MCF 10A (cell line): ENCODE measurements at regions of chr20 and their contacts with region 1.

Region 1: DNA sequence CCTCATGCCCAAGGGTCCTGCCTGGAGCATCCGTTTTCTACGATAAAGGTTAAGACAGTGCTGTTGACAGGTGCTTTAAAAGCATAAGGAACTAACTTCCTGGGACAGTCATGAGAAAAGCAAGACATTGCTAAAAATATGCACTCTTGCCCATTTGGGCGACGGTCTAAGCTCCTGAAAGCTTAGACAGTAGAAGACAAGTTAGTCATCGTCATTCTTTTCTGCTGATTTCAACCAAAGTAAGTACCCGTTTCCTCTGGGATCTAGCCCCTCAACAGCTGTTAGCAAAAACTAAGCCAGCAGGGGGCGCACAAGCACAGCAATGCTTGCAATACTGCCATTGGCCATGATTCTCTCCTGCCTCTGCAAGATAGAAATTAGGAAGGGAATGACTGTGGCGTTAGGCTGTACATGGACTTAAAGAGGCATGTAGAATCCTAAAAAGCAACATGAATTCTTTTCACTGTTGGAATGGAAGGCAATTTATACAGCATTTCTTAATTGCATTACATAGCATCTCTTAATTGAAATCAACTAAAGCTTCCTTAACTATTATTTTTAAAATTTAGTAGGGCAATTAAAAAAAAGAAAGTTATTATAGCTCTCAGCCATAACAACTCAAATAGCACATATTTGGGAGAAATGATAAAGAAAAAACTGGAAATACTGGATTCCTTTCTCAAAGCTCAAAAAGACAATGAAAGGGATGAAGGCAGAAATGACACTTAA is 147.8 kb upstream of the RALGAPA2 start:
- DNase-seq: peak; percentile 89
- H3K4me3 Mint-ChIP-seq: no peak overlapping the region
- H3K27ac Mint-ChIP-seq: no peak overlapping the region
- H3K4me1 Mint-ChIP-seq: peaks cover 9% of the 10 kb centered on the region
- H3K27me3 Mint-ChIP-seq: no peaks in the 10 kb centered on the region
- CTCF ChIP-seq: peak; percentile 85

Region 2: DNA sequence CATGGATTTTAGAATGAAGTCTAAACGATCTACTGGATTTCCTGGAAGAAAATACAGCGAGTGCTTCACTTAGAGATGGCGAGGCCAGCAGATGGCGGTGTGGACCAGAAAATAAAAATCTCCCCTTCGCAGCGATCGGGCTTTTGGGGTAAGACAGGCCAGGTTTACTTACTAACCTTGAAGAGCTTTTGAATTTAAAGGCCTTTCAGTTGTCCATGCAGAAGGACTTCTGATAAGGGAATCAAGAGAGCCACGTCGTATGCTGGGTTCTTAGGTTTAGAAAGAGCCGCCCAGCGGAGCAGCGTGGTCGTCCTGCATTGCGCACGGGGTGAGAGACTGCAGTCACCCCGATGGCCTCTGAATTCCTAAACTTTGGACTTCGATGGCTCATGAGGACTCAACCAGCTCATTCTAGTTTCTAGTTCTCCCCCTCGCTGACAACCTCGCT is 22.6 kb before region 1 on chr20:
- CTCF ChIA-PET with region 1: interaction called, 171 read pairs
- POLR2A ChIA-PET with region 1: no interaction called
- intact Hi-C with region 1: no loop called
- DNase-seq: peak; percentile 50
- H3K4me3 Mint-ChIP-seq: no peak overlapping the region
- H3K27ac Mint-ChIP-seq: no peak overlapping the region
- H3K4me1 Mint-ChIP-seq: no peaks in the 10 kb centered on the region
- H3K27me3 Mint-ChIP-seq: peaks cover 17% of the 10 kb centered on the region
- CTCF ChIP-seq: peak; percentile 79

Region 3: DNA sequence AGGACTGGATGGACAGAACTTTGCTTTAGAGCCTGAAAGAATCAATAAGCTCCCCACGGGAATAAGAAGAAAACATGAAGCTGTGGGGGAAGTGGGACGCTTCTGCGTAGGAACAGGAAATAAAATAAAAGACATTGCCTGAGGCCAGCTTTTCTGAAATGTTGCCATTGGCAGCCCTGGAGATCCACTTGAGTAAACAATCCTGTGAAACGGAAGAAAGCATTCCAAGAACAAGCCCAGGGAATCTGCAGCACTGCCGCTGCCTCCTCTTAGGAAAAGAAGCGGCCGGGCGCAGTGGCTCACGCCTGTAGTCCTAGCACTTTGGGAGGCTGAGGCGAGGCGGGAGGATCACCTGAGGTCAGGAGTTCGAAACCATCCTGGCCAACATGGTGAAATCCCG is 34.5 kb after region 1 on chr20:
- CTCF ChIA-PET with region 1: interaction called, 10 read pairs
- POLR2A ChIA-PET with region 1: no interaction called
- intact Hi-C with region 1: no loop called
- DNase-seq: peak; percentile 33
- H3K4me3 Mint-ChIP-seq: no peak overlapping the region
- H3K27ac Mint-ChIP-seq: no peak overlapping the region
- H3K4me1 Mint-ChIP-seq: peaks cover 6% of the 10 kb centered on the region
- H3K27me3 Mint-ChIP-seq: no peaks in the 10 kb centered on the region
- CTCF ChIP-seq: no peak

Region 4: DNA sequence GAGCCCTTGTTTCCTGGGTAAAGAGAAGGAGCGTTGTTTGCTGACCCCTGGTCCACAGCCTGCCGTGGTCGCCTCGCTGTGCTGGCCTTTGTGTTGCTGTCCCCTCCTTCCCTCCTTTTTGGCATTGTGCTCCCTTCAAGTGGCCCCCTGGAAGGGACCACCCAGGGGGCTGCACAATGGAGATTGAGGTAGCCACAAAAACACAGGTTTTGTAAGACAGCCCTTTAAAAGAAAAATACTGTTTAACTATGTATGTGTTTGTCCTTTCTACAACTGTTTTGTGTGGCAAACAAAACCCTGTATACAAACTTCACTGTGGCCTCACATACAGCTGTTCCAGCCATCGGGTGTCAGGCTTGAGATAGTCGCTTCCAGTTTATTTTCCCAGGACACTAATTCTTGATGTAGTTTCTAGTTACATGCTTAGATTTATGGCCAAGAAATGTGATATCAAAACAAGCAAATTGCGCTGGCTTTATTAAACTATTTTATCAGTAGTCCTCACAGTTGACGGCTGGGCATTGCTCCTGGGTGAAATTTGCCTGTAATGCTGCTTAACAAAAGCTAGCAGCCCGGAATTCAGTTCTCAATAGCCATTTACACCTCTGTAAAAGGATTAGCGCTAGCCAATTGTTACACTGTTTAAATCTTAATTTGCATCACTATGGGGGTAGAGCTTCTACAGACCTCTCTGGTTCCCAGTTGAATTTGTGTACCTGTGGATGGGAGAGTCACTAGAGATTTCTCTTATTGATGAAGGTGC is 329.7 kb after region 1 on chr20:
- CTCF ChIA-PET with region 1: interaction called, 21 read pairs
- POLR2A ChIA-PET with region 1: no interaction called
- intact Hi-C with region 1: no loop called
- DNase-seq: no peak
- H3K4me3 Mint-ChIP-seq: no peak overlapping the region
- H3K27ac Mint-ChIP-seq: no peak overlapping the region
- H3K4me1 Mint-ChIP-seq: peaks cover 2% of the 10 kb centered on the region
- H3K27me3 Mint-ChIP-seq: no peaks in the 10 kb centered on the region
- CTCF ChIP-seq: no peak

Region 5: DNA sequence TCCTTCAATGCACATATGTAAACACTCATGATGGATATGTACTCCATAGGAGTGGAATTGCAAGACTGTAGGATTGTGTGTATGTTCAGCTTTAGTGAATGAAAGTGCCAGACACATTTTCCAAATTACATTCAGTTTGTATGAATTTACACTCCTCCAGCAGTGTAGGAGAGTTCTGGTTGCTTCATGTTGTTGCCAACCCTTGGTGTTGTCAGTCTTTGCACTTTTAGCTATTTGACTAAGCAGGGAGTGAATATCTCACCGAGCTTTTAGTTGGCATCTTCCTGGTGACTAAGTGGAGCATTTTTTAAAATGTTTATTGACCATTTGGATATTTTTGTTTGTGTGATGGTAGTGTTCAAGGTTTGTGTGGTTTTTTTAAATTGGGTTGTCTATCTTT is 513.2 kb after region 1 on chr20:
- CTCF ChIA-PET with region 1: interaction called, 10 read pairs
- POLR2A ChIA-PET with region 1: no interaction called
- intact Hi-C with region 1: no loop called
- DNase-seq: no peak
- H3K4me3 Mint-ChIP-seq: no peak overlapping the region
- H3K27ac Mint-ChIP-seq: peak overlapping the region; percentile 44
- H3K4me1 Mint-ChIP-seq: peaks cover 5% of the 10 kb centered on the region
- H3K27me3 Mint-ChIP-seq: no peaks in the 10 kb centered on the region
- CTCF ChIP-seq: no peak

Region 6: GRCh38 chr20:21505161-21505809 is 645.0 kb after region 1 on chr20:
- CTCF ChIA-PET with region 1: interaction called, 316 read pairs
- POLR2A ChIA-PET with region 1: interaction called, 13 read pairs
- intact Hi-C with region 1: loop called (anchors 1 kb)
- DNase-seq: peak; percentile 48
- H3K4me3 Mint-ChIP-seq: peak overlapping the region; percentile 39
- H3K27ac Mint-ChIP-seq: no peak overlapping the region
- H3K4me1 Mint-ChIP-seq: no peaks in the 10 kb centered on the region
- H3K27me3 Mint-ChIP-seq: peaks cover 14% of the 10 kb centered on the region
- CTCF ChIP-seq: peak; percentile 99

Region 7: GRCh38 chr20:21577551-21577950 is 717.3 kb after region 1 on chr20:
- CTCF ChIA-PET with region 1: interaction called, 62 read pairs
- POLR2A ChIA-PET with region 1: no interaction called
- intact Hi-C with region 1: loop called (anchors 2 kb)
- DNase-seq: no peak
- H3K4me3 Mint-ChIP-seq: no peak overlapping the region
- H3K27ac Mint-ChIP-seq: no peak overlapping the region
- H3K4me1 Mint-ChIP-seq: no peaks in the 10 kb centered on the region
- H3K27me3 Mint-ChIP-seq: peaks cover 72% of the 10 kb centered on the region
- CTCF ChIP-seq: no peak